HepG2 (cell line): ENCODE measurements at regions of chrX and their contacts with region 1.

Region 1: GRCh38 chrX:43313035-43313434 is 343.1 kb upstream of the MAOA start:
- DNase-seq: peak; percentile 37
- ATAC-seq: no peak
- H3K4me3 ChIP-seq: no peak overlapping the region
- H3K27ac ChIP-seq: no peak overlapping the region
- H3K4me1 ChIP-seq: peaks cover 27% of the 10 kb centered on the region
- H3K27me3 ChIP-seq: no peaks in the 10 kb centered on the region
- CTCF ChIP-seq: no peak
- EP300 ChIP-seq: peak in 1 of 2 experiments; percentile 65; a peak in 2 of 4 replicates
- POLR2A ChIP-seq: no peak
- RAD21 ChIP-seq: no peak

Region 2: GRCh38 chrX:43225624-43226328 is 87.3 kb before region 1 on chrX:
- CTCF ChIA-PET with region 1: no interaction called
- POLR2A ChIA-PET with region 1: no interaction called
- in situ Hi-C with region 1: no loop called
- intact Hi-C with region 1: loop called (anchors 10 kb)
- DNase-seq: peak; percentile 71
- ATAC-seq: peak; percentile 100
- H3K4me3 ChIP-seq: peak overlapping the region in 1 of 3 experiments; percentile 9; a peak in 2 of 6 replicates
- H3K27ac ChIP-seq: peak overlapping the region; percentile 33
- H3K4me1 ChIP-seq: peaks cover 30% of the 10 kb centered on the region
- H3K27me3 ChIP-seq: no peaks in the 10 kb centered on the region
- CTCF ChIP-seq: no peak
- EP300 ChIP-seq: peak in 1 of 2 experiments; percentile 57; a peak in 2 of 4 replicates
- POLR2A ChIP-seq: no peak
- RAD21 ChIP-seq: no peak

Region 3: DNA sequence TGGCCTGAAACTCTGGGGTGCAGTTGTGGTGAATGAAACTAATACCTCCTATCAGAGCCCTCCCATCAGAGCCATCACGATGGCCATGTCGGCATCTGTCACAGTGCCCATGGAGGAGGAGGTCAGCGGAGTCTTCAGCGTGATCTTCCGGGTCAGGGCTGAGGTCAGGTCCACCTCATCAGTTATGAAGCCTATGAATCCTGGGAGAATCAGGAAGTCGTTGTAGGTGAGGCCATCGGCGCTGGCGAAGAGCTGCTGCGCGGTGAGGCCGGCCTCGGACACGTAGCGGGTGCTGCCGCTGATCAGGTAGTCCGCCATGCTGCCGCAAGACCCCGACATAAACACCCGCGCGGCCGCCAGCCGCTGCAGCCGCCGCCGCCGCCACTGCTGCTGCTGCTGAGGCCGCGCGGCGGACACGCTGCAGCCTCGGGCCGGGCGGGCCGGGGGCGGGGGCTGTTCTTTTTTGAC is 33.7 kb before region 1 on chrX:
- CTCF ChIA-PET with region 1: no interaction called
- POLR2A ChIA-PET with region 1: no interaction called
- in situ Hi-C with region 1: no loop called
- intact Hi-C with region 1: no loop called
- DNase-seq: no peak
- ATAC-seq: no peak
- H3K4me3 ChIP-seq: no peak overlapping the region
- H3K27ac ChIP-seq: no peak overlapping the region
- H3K4me1 ChIP-seq: no peaks in the 10 kb centered on the region
- H3K27me3 ChIP-seq: no peaks in the 10 kb centered on the region
- CTCF ChIP-seq: no peak
- EP300 ChIP-seq: no peak
- POLR2A ChIP-seq: no peak
- RAD21 ChIP-seq: no peak